GM13977 (cell line): ENCODE measurements at regions of chr19 and their contacts with region 1.

Region 1: DNA sequence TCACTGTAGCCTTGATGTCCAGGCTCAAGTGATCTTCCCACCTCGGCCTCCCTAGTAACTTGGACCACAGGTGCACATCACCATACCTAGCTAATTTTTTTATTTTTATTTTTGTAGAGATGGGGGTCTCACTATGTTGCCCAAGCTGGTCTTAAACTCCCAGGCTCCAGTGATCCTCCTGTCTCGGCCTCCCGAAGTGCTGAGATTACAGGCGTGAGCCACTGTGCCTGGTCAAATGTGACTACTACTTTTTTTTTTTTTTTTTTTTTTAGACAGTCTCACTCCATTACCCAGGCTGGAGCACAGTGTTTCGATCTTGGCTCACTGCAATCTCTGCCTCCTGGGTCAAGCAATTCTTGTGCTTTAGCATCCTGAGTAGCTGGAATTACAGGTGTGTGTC is 20.6 kb upstream of the COX7A1 start:
- DNase-seq: no peak
- CTCF ChIP-seq: no peak

Region 2: DNA sequence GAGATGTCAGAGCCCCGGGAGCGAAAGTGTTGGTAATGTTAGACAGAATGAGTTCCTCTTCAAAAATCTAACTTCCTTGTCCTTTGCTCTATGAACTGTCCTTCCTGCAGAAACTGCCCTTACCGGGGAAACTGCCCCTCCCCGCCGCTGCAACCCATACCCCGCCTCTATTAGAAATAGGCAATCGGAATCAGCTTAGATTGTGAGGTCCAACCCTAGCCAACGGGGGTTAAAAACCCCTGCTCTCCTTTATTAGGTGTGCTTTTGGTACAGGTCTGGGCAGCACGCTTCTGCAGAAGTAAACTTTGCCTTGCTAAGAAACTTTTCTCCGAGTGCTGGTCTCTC is 44.5 kb before region 1 on chr19:
- in situ Hi-C with region 1: loop called (anchors 10 kb)
- DNase-seq: no peak
- CTCF ChIP-seq: no peak